Naive thymus-derived CD4-positive, alpha-beta T cell (primary cell): ENCODE measurements at regions of chr6 and their contacts with region 1.

Region 1: GRCh38 chr6:166907373-166907841 is 48.9 kb downstream of the RNASET2 start:
- DNase-seq: peak in 3 of 9 donors; percentile 7 to 30 (median 14)
- ATAC-seq: peak; percentile 53
- H3K4me3 ChIP-seq: peak overlapping the region; percentile 27
- H3K4me3 Mint-ChIP-seq: peak overlapping the region; percentile 33 to 72 (median 56)
- H3K27ac ChIP-seq: no peak overlapping the region
- H3K27ac Mint-ChIP-seq: peak overlapping the region; percentile 36 to 89 (median 74)
- H3K4me1 ChIP-seq: peaks cover 9 to 14% of the 10 kb centered on the region in 2 donors
- H3K4me1 Mint-ChIP-seq: peaks cover 13 to 46% (median 25%) of the 10 kb centered on the region in 7 donors
- H3K27me3 ChIP-seq: no peaks in the 10 kb centered on the region
- H3K27me3 Mint-ChIP-seq: no peaks in the 10 kb centered on the region

Region 2: GRCh38 chr6:166950443-166950821 is 43.0 kb after region 1 on chr6:
- CTCF ChIA-PET with region 1: no interaction called
- POLR2A ChIA-PET with region 1: no interaction called
- intact Hi-C with region 1: loop called in 1 of 2 experiments (anchors 1 kb)
- DNase-seq: peak in 1 of 9 donors; percentile 31
- ATAC-seq: peak; percentile 12
- H3K4me3 ChIP-seq: peak overlapping the region; percentile 45
- H3K4me3 Mint-ChIP-seq: peak overlapping the region; percentile 51 to 95 (median 84)
- H3K27ac ChIP-seq: peak overlapping the region; percentile 92
- H3K27ac Mint-ChIP-seq: peak overlapping the region; percentile 91 to 99 (median 98)
- H3K4me1 ChIP-seq: peaks cover 28 to 63% of the 10 kb centered on the region in 2 donors
- H3K4me1 Mint-ChIP-seq: peaks cover 42 to 67% (median 64%) of the 10 kb centered on the region in 7 donors
- H3K27me3 ChIP-seq: no peaks in the 10 kb centered on the region
- H3K27me3 Mint-ChIP-seq: no peaks in the 10 kb centered on the region